ENCODE measurements at regions of chr2 and their contacts with region 1.

Region 1: GRCh38 chr2:230600285-230600684 is 112.4 kb upstream of the CAB39 start:
- DNase-seq: peak in 1 of 2 experiments; percentile 70
- H3K4me3 ChIP-seq: no peak overlapping the region
- H3K27ac ChIP-seq: no peak overlapping the region
- H3K4me1 ChIP-seq: peaks cover 9% of the 10 kb centered on the region
- H3K27me3 ChIP-seq: peaks cover 21% of the 10 kb centered on the region
- CTCF ChIP-seq: no peak

Region 2: DNA sequence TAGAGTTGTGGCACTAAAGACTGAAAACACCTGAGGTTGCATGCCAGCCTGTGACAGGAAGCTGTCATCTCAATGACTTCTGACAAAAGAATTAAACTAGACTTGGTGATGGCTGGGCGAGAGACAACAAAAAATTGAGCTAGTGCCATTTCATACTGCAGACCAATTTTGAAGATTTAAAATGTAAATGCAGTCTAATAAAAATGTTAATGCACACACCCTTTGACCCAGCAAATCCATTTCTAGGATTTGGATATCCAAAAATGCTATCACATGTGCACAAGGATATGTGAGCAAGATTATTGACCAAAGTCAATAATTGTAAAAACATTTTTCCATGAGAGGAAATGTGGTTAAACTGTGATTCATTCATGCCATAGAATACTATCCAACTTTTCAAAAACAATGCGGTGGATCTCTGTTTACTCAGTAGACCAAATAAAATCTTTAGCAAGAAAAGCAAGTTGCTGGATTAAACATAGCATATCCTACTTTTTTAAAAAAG is 672.4 kb before region 1 on chr2:
- CTCF ChIA-PET with region 1: no interaction called
- POLR2A ChIA-PET with region 1: no interaction called
- intact Hi-C with region 1: no loop called
- DNase-seq: peak in 1 of 2 experiments; percentile 75
- H3K4me3 ChIP-seq: no peak overlapping the region
- H3K27ac ChIP-seq: peak overlapping the region; percentile 5; the same call in 1 of the 2 replicates
- H3K4me1 ChIP-seq: peaks cover 54% of the 10 kb centered on the region
- H3K27me3 ChIP-seq: no peaks in the 10 kb centered on the region
- CTCF ChIP-seq: no peak

Region 3: GRCh38 chr2:230144355-230144754 is 455.9 kb before region 1 on chr2:
- CTCF ChIA-PET with region 1: no interaction called
- POLR2A ChIA-PET with region 1: interaction called, 20 read pairs
- intact Hi-C with region 1: no loop called
- DNase-seq: no peak
- H3K4me3 ChIP-seq: no peak overlapping the region
- H3K27ac ChIP-seq: no peak overlapping the region
- H3K4me1 ChIP-seq: no peaks in the 10 kb centered on the region
- H3K27me3 ChIP-seq: no peaks in the 10 kb centered on the region
- CTCF ChIP-seq: no peak

Region 4: GRCh38 chr2:230564805-230565779 is 35.2 kb before region 1 on chr2:
- CTCF ChIA-PET with region 1: no interaction called
- POLR2A ChIA-PET with region 1: no interaction called
- intact Hi-C with region 1: no loop called
- DNase-seq: no peak
- H3K4me3 ChIP-seq: no peak overlapping the region
- H3K27ac ChIP-seq: no peak overlapping the region
- H3K4me1 ChIP-seq: no peaks in the 10 kb centered on the region
- H3K27me3 ChIP-seq: no peaks in the 10 kb centered on the region
- CTCF ChIP-seq: no peak

Region 5: DNA sequence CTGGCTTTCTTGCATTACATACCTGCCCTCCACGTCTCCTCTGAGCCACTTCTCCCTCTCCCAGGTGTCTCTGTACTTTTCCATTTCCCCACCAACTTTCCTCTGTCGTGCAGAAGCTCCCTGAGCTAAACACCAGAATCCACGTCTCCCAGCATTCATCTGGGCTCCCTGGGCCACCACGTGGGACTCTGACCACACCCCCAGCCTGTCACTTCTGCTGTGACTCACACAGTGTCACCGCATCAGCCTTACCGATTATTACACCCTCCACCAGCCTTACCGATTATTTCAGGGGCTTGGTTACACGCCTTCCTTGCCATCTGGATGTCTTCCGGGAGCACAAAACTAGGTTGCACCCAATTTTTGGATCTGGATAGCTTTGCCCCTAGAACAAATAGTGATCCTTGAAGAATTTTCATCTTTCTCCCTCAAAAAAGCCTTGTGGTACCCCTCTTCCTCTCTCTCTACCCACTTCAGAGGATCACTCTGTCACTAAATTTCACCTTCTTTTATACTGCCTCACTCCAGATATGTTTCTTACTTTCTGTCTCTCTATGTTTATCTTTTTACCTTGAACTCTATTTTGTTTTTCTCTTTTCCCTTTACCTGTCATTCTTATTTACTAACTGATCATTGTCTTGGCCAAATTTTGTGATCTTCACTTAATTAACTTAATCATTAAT is 24.5 kb before region 1 on chr2:
- CTCF ChIA-PET with region 1: no interaction called
- POLR2A ChIA-PET with region 1: no interaction called
- intact Hi-C with region 1: no loop called
- DNase-seq: peak in 1 of 2 experiments; percentile 34
- H3K4me3 ChIP-seq: no peak overlapping the region
- H3K27ac ChIP-seq: no peak overlapping the region
- H3K4me1 ChIP-seq: no peaks in the 10 kb centered on the region
- H3K27me3 ChIP-seq: no peaks in the 10 kb centered on the region
- CTCF ChIP-seq: no peak